Heart right ventricle (tissue), 16 donors: ENCODE measurements at regions of chr3 and their contacts with region 1.

Region 1: GRCh38 chr3:39843440-39843839 is 34.0 kb downstream of the MYRIP start:
- DNase-seq: no peak
- ATAC-seq: no peak
- H3K4me3 ChIP-seq: no peak overlapping the region
- H3K27ac ChIP-seq: no peak overlapping the region
- H3K4me1 ChIP-seq: no peaks in the 10 kb centered on the region
- H3K27me3 ChIP-seq: no peaks in the 10 kb centered on the region
- CTCF ChIP-seq: no peak

Region 2: DNA sequence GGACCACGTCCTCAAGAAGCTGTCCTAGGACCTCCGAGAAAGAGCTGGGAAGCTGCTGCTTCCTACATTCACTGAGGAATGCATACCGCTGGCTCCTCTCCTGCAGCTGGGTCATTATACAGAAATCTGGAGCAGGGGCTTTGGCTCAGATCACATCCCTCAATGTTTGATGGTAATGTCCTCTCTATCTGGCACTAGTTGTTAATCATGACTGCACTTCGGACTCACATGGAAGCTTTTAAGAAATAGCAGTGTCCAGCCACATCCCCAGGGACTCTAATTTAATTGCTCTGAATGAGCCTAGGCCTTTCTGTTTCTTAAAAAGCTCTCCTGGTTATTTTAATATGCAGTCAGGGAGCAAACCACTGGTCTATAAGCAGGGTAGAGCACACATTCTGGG is 59.8 kb before region 1 on chr3:
- intact Hi-C with region 1: loop called in 1 of 10 experiments (anchors 2 kb)
- DNase-seq: no peak
- ATAC-seq: no peak
- H3K4me3 ChIP-seq: no peak overlapping the region
- H3K27ac ChIP-seq: no peak overlapping the region
- H3K4me1 ChIP-seq: peaks cover 0 to 6% (median 0%) of the 10 kb centered on the region in 9 donors
- H3K27me3 ChIP-seq: no peaks in the 10 kb centered on the region
- CTCF ChIP-seq: no peak

Region 3: GRCh38 chr3:39801216-39801615 is 42.2 kb before region 1 on chr3:
- intact Hi-C with region 1: no loop called
- DNase-seq: no peak
- ATAC-seq: no peak
- H3K4me3 ChIP-seq: no peak overlapping the region
- H3K27ac ChIP-seq: no peak overlapping the region
- H3K4me1 ChIP-seq: no peaks in the 10 kb centered on the region
- H3K27me3 ChIP-seq: peaks cover 0 to 12% (median 0%) of the 10 kb centered on the region in 7 donors
- CTCF ChIP-seq: no peak

Region 4: DNA sequence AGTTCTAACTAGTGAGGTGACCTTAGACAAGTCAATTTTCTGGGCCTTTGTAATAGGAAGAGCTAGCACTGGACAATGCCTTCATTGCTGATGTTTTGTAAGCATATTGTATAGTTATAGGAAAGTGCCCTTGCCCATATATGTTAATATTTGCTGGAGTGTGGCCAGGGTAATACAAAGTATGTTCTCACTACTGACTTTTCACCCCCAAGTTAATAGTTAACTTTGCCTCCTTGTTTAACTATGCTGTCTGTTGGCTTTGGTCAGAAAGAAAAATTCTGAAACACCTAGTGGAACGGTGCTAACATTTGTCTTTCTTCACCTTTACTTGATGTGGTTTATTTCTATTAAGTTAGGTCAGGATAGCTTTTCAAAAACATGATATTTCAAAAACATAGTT is 1068.5 kb after region 1 on chr3:
- intact Hi-C with region 1: no loop called
- DNase-seq: no peak
- ATAC-seq: no peak
- H3K4me3 ChIP-seq: no peak overlapping the region
- H3K27ac ChIP-seq: no peak overlapping the region
- H3K4me1 ChIP-seq: no peaks in the 10 kb centered on the region
- H3K27me3 ChIP-seq: no peaks in the 10 kb centered on the region
- CTCF ChIP-seq: no peak